Mammary epithelial cell (primary cell): ENCODE measurements at regions of chr5 and their contacts with region 1.

Region 1: DNA sequence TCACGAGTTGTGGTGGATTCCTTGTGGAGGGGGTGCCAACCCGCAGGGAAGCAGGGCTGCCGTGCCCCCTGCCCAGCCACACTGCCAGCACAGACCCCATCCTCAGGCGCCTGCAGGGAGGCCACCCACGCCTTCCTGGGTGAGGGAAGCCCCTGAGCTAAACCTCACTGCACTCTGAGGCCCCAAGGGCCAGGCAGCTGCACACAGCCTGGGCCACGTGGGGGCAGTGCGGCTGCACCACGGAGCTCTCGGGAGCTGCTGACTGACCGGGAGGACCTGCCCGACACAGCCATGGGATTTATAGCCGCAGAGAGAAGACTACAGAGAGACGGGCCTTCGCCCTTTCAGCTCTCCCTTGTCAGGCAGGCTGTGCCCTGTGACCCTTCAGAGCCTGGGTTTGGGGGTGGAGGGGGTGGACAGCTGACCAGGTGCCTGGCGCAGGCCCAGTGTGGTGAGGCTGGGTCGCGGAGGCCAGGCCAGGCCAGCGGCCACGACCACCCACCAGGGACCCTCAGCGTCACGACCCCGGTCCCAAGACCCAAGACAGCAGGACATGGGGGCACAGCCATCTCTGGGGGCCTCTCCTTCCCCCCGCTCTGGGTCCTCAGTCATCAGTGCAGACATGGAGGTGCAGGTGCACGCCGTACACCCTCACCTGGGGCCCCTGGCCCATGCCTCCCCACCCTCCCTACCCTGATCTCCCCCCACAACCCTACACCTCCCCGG is 4.3 kb upstream of the AHRR start:
- DNase-seq: peak; percentile 30
- H3K4me3 ChIP-seq: no peak overlapping the region
- H3K27ac ChIP-seq: no peak overlapping the region
- H3K4me1 ChIP-seq: peaks cover 15% of the 10 kb centered on the region
- H3K27me3 ChIP-seq: peaks cover 10% of the 10 kb centered on the region
- CTCF ChIP-seq: peak; percentile 30 to 51

Region 2: GRCh38 chr5:188488-189481 is 128.5 kb before region 1 on chr5:
- CTCF ChIA-PET with region 1: no interaction called
- dilution Hi-C with region 1: no loop called
- in situ Hi-C with region 1: no loop called
- intact Hi-C with region 1: loop called (anchors 2 kb)
- DNase-seq: peak; percentile 70
- H3K4me3 ChIP-seq: peak overlapping the region in 1 of 3 experiments; percentile 2
- H3K27ac ChIP-seq: no peak overlapping the region
- H3K4me1 ChIP-seq: peaks cover 5% of the 10 kb centered on the region
- H3K27me3 ChIP-seq: peaks cover 6% of the 10 kb centered on the region
- CTCF ChIP-seq: peak; percentile 84 to 97

Region 3: DNA sequence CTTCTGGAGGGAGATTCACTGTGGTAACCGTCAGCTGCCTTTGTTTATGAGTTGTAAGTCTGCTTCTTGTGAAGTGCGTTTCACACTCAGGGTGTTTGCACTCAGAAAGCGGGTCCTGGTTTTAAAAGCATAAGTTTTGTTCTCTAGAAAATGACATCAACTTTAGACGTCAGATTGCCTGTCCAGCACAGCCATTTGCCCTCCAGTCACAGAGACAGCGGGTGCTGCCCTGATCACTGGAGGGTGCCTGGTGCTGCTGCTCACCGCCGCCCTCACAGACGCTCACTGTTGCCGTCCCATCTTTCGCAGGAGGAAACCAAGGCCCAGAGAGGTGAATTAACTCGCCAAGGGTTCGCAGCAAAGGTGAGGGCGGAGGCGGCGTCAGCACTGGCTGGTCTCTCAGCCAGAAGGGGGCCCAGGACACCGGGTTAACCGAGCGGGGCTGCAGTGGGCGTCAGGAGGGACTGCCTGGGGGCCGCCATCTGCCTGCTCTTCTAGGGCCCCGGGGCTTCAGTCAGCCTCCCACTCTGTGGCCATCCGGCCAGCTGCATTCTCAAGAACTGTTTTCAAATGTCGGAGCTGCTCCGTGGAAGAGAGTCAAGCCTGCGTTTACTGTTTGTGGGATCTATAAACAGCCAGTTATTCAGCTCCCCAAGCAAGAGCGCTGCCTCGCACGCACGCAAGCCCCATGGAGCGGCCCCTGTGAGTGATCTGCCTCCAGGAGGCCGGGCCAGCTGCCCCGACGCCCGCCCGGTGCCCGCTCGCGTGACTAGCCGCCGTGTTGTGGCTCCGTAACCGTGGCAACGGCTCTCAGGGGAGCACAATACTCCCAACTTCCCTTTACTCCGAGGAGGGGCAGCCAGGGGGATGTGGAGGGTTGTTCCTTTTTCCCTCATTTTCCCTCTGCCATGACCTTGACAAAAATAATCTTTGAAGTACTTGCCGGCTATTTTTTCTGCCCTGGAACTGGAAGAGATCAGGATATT is 82.3 kb after region 1 on chr5:
- CTCF ChIA-PET with region 1: no interaction called
- dilution Hi-C with region 1: no loop called
- in situ Hi-C with region 1: no loop called
- intact Hi-C with region 1: no loop called
- DNase-seq: peak; percentile 59
- H3K4me3 ChIP-seq: no peak overlapping the region
- H3K27ac ChIP-seq: no peak overlapping the region
- H3K4me1 ChIP-seq: peaks cover 12% of the 10 kb centered on the region
- H3K27me3 ChIP-seq: no peaks in the 10 kb centered on the region
- CTCF ChIP-seq: no peak

Region 4: DNA sequence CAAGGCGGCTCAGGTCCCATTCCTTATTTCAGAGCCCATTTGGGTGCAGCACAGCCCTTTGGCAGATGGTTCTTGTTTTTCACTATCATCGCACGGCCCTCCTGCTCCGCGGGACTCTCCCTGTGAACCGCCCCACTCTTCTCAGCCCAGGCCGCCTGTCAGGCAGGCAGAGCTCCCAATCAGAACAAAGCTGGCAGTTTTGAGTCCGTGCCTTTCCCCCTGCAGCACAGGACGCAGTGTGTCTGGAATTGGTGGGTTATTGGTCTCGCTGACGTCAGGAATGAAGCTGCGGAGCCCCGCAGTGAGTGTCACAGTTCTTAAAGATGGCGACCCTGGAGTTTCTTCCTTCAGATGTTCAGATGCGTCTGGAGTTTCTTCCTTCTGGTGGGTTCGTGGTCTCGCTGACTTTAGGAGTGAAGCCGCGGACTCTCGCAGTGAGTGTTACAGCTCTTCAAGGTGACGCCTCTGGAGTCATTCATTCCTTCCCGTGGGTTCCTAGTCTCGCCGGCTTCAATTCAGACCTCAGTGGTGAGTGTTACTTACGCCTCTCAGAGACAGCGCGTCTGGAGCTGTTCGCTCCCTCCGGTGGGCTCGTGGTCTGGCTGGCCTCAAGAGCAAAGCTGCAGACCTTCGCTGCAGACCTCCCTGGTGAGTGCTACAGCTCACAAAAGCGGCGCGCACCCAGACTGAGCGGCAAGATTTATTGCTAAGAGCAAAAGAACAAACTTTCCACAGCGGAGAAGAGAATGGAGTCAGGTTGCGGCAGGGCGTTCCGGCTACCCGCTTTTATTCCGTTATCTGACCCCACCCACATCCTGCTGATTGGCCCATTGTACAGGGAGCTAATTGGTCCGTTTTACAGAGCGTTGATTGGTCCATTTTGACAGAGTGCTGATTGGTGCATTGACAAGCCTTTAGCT is 459.8 kb after region 1 on chr5:
- CTCF ChIA-PET with region 1: no interaction called
- dilution Hi-C with region 1: no loop called
- in situ Hi-C with region 1: no loop called
- intact Hi-C with region 1: loop called (anchors 5 kb)
- DNase-seq: no peak
- H3K4me3 ChIP-seq: no peak overlapping the region
- H3K27ac ChIP-seq: no peak overlapping the region
- H3K4me1 ChIP-seq: no peaks in the 10 kb centered on the region
- H3K27me3 ChIP-seq: no peaks in the 10 kb centered on the region
- CTCF ChIP-seq: no peak